ENCODE measurements at regions of chr9 and their contacts with region 1.

Region 1: GRCh38 chr9:69054989-69055388 is 19.4 kb downstream of the FXN start:
- DNase-seq: no peak
- H3K4me3 ChIP-seq: no peak overlapping the region
- H3K27ac ChIP-seq: no peak overlapping the region
- H3K4me1 ChIP-seq: no peaks in the 10 kb centered on the region
- H3K27me3 ChIP-seq: no peaks in the 10 kb centered on the region
- CTCF ChIP-seq: no peak
- POLR2A ChIP-seq: no peak

Region 2: DNA sequence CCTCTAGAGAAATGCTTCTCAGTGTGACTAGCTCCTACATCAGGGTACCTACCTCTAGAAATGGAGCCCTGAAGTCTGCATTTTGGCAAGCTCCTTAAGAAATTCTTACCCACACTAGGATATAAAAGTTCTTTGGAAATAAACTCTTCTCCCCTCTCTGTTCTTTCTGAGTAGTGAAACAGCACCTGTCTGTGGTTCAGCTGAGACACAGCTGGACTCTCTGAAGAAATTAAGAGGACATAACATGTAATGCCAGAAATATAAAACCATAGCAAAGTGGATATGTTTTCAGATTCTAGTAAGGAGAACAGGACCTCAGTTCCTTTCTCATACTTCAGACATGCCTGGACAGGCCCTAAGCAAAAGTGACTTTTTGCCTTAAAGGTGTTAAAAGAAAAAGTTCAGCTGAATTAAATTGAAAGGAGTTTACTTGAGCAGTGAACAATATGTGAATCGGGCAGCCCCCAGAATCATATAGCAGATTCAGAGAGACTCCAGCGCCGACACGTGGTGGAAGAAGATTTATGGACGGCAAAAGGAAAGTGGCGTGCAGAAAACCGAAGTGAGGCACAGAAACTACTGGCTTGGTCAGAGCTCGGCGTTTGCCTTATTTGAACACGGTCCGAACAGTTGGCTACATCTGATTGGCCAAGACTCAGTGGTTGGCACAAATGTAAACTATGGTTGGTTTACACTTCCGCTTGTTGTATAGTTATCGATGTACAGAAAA is 105.6 kb before region 1 on chr9:
- intact Hi-C with region 1: no loop called
- DNase-seq: no peak
- H3K4me3 ChIP-seq: no peak overlapping the region
- H3K27ac ChIP-seq: no peak overlapping the region
- H3K4me1 ChIP-seq: no peaks in the 10 kb centered on the region
- H3K27me3 ChIP-seq: no peaks in the 10 kb centered on the region
- CTCF ChIP-seq: no peak
- POLR2A ChIP-seq: no peak

Region 3: DNA sequence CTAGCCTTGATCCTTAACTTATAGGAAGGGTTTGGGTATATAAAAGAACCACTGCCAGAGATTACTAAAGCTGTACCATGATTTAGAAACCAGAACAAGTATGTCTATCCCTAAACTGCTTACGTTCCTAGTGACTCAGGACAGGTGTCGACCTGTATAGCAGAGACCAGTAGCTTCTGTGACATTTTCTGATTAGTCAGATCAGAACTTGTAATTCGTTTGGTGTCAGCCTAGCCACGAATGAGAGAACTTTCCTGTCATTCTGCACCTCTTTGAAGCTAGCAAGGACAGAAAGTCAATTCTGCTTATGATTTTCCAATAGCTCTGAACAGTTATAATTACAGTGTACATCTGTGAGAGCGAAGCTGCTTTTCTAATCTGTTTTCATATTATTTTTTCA is 80.6 kb before region 1 on chr9:
- intact Hi-C with region 1: no loop called
- DNase-seq: no peak
- H3K4me3 ChIP-seq: peak overlapping the region in 1 of 2 donors; percentile 23
- H3K27ac ChIP-seq: no peak overlapping the region
- H3K4me1 ChIP-seq: peaks cover 14% of the 10 kb centered on the region
- H3K27me3 ChIP-seq: no peaks in the 10 kb centered on the region
- CTCF ChIP-seq: no peak
- POLR2A ChIP-seq: no peak

Region 4: DNA sequence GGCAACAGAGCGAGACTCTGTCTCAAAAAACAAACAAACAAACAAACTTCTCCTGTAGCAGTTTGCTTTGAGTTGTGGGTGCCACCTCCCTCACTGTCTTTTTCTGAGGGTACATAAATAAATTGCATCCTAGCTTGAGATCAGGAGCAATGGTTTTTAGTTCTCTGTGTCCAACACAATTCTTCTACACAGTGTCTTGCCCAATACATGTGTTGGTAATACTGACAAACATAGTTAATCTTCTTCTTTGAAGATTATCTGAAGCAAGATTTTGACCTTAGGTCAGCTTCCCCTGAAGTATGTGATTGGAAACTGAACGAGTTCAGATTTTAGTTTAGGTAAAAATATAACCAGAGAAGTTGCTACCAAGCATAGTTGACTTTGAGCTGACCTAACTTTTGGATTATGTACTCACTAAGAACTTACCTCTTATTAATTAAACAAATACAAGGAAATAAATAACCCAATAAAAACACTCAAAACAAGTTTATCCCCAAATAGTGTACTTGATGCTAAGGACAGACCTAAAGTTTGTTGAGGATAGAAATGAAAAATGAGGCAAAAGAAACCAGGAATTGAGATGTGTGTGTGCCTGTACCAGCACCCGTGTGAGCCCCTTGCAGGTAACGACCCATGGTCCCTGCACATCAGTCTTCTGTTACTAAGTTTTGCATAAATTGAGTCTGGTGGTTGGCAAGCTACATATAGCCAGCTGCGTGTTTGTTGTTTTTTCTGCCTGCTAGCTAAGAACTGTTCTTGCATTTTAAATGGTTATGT is 135.3 kb after region 1 on chr9:
- intact Hi-C with region 1: loop called (anchors 5 kb)
- DNase-seq: no peak
- H3K4me3 ChIP-seq: no peak overlapping the region
- H3K27ac ChIP-seq: no peak overlapping the region
- H3K4me1 ChIP-seq: peaks cover 11% of the 10 kb centered on the region
- H3K27me3 ChIP-seq: no peaks in the 10 kb centered on the region
- CTCF ChIP-seq: no peak
- POLR2A ChIP-seq: no peak

Region 5: DNA sequence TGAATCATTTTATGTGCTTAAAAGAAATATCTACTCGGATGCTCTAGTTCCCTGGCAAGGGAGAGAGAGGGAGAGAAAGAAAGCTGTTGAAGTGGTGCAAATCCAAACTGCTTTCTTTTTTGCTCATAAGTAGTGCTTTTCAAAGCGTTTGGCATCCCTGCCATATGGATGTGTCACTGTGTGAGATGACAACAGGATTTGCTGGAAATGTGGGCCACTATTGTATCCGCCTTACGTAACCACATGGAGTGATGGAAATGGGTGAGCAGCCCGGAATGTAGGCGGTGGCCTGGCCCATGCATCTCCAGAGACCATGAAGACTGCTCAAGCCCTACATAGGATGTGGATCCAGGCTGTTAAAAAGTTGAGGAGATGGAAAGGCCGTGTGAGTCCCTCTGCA is 149.9 kb after region 1 on chr9:
- intact Hi-C with region 1: no loop called
- DNase-seq: no peak
- H3K4me3 ChIP-seq: no peak overlapping the region
- H3K27ac ChIP-seq: no peak overlapping the region
- H3K4me1 ChIP-seq: peaks cover 6% of the 10 kb centered on the region
- H3K27me3 ChIP-seq: no peaks in the 10 kb centered on the region
- CTCF ChIP-seq: no peak
- POLR2A ChIP-seq: no peak

Region 6: GRCh38 chr9:69444021-69444420 is 389.0 kb after region 1 on chr9:
- intact Hi-C with region 1: no loop called
- DNase-seq: no peak
- H3K4me3 ChIP-seq: no peak overlapping the region
- H3K27ac ChIP-seq: no peak overlapping the region
- H3K4me1 ChIP-seq: no peaks in the 10 kb centered on the region
- H3K27me3 ChIP-seq: no peaks in the 10 kb centered on the region
- CTCF ChIP-seq: no peak
- POLR2A ChIP-seq: no peak